Left colon (tissue), 2 donors: ENCODE measurements at regions of chr22 and their contacts with region 1.

Region 1: DNA sequence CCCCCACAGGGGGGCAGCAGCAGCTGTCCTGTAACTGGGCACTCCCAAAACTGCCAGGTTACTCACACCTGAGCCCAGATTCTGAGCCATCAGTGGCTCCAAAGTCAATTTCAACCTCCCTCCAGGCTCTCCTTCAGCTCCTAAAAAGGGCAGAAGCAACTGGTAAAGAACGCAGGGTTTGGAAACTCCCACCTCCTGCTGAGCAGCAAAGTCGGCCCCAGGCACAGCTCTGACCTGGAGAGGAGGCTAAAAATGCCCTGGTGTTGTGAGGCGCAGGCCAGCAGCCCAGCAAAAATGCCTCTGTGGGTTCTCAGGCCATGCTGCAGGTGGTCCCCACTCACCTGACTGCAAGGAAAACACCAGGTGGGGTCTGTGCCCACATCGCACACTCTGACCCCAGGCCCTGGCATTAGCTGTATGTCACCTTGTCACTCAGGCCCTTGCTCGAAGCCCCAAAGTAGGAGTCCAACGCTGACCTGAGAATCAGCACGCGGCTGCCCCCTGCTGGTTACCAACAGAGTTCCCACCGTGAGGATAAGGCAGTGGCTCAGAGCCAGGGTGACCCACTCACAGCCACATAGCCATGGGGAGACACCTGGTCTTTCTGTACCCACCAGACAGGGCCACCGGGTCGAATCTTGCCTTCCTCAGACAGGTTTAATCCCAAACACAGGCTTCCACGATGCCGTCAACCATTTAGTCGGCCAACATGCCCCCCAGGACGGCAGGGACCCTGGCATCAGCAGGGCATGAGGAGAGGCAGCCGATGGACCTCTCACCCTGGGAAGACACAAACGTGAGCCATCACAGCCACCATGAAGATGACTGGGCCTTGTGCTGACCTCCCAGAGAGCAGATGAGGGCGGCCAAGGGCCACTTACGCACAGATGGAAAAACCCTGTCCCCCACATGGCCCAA is 11.1 kb downstream of the POLR3H start:
- DNase-seq: peak; percentile 64 to 80
- ATAC-seq: peak; percentile 61

Region 2: DNA sequence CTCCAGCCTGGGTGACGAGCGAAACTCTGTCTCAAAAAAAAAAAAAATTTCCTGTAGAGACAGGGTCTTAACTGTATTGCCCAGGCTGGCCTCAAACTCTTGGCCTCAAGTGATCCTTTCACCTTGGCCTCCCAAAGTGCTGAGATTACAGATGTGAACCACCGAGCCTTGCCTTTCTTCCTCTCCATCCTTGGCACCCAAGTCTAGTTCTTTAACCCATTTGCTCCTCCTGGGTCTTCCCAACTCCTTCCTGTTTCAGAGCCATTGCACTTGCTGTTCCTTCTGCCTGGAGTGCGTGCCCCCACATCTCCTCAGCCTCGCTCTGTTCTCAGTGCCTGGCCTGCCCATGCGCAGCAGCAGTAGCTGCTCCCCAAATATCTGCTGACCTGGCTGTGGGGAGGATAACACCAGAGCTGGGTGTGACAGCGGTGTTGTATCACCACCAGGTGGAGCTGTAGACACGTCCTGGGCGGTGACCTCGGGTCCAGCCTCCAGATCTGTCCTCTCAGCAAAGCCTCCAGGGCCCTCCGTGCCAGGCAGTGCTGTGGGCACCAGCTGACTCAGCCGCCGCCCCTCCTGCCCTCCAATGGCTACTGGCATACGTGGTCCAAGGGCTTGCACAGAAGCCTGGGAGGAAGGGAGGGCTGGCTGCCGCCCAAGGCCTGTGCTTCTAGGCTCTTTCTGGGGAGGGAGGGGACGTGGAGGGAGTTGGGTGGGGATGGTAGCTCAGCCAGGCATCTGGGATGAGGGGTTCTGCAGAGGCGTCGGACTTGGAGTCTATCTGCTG is 129.4 kb before region 1 on chr22:
- intact Hi-C with region 1: loop called in 1 of 2 experiments (anchors 5 kb)
- DNase-seq: peak; percentile 82 to 92
- ATAC-seq: peak; percentile 83

Region 3: DNA sequence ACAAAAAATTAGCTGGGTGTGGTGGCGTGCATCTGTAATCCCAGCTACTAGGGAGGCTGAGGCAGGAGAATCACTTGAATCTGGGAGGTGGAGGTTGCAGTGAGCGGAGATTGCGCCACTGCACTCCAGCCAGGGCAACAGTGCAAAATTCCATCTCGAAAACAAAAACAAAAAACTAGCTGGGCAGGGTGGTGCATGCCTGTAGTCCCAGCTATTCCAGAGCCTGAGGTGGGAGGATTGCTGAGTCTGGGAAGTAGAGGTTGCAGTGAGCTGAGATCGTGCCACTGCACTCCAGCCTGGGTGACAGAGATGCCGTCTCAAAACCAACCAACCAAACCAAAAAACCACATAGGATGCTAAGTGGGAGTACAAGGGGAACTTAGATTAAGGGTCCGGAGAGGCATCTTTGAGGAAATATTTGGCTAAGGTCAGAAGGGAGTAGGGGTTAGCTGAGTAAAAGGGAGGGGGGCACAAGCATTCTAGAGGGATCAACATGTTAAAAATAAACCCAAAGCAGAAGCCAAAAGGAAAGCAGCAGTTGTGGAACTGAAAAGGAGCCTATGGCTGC is 74.9 kb before region 1 on chr22:
- intact Hi-C with region 1: no loop called
- DNase-seq: no peak
- ATAC-seq: no peak

Region 4: GRCh38 chr22:41589391-41590241 is 56.4 kb after region 1 on chr22 and contains the start of gene PMM1:
- intact Hi-C with region 1: loop called in 1 of 2 experiments (anchors 10 kb)
- DNase-seq: peak; percentile 100
- ATAC-seq: peak; percentile 85
- total RNA-seq, gene PMM1: 48.6 to 61.8 TPM